Activated CD4-positive, alpha-beta T cell treated with anti-CD3 and anti-CD28 coated beads for 36 hours (primary cell): ENCODE measurements at regions of chr1 and their contacts with region 1.

Region 1: GRCh38 chr1:235504496-235505222 is 407 bp upstream of the B3GALNT2 start:
- DNase-seq: peak; percentile 99
- ATAC-seq: peak; percentile 89
- H3K4me3 Mint-ChIP-seq: peak overlapping the region; percentile 93
- H3K27ac Mint-ChIP-seq: peak overlapping the region; percentile 98
- H3K4me1 Mint-ChIP-seq: peaks cover 30% of the 10 kb centered on the region
- H3K27me3 Mint-ChIP-seq: no peaks in the 10 kb centered on the region

Region 2: DNA sequence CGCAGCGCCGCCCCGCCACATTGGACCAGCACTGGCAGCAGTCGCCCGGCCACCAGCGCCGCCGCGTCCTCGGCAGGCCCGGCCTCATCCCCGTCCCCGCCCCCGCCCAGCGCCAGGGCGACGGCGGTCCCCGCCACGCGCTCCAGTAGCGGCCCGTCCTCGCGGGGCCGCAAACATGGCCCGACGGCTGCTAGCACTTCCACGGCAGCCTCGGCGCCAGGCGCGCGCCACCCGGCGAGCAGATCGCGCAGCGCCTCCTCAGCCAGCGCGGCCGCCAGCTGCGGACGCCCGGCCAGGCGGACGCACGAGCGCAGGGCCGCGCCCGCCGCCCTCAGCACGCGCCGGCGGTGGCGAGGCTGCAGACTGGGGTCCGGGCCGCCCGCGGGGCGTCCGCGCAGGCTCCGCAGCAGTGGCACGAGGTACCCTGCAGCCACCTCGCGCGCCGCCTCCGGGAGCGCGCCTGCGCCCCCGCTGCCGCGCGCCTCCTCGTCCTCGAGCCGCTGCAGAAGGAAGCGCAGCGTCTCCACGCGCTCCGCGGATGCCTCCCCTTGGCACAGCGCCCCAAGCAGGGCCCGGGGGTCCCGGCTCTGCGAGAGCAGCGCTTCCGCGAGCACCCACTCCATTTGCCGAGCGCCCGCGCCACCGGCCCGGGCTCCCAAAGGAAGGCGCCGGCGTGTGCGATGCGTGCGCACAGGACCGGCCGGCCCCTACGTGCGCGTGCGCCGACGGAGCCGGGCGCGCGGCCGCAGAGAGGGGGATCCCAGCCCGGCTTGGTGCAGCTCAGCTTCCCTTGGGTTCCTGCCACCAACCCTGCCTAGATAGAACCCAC is 1026.0 kb before region 1 on chr1 and contains the start of gene TARBP1:
- CTCF ChIA-PET with region 1: no interaction called
- POLR2A ChIA-PET with region 1: no interaction called
- intact Hi-C with region 1: loop called in 1 of 2 experiments (anchors 2 kb)
- DNase-seq: peak; percentile 86
- ATAC-seq: peak; percentile 81
- H3K4me3 Mint-ChIP-seq: peak within 1 kb of the TSS; percentile 82
- H3K27ac Mint-ChIP-seq: peak within 1 kb of the TSS; percentile 80
- H3K4me1 Mint-ChIP-seq: peaks cover 56% of the 10 kb centered on the region
- H3K27me3 Mint-ChIP-seq: peaks cover 16% of the 10 kb centered on the region
- total RNA-seq, gene TARBP1: 37.7 to 41.5 TPM

Region 3: GRCh38 chr1:235018161-235018560 is 486.5 kb before region 1 on chr1:
- CTCF ChIA-PET with region 1: no interaction called
- POLR2A ChIA-PET with region 1: no interaction called
- intact Hi-C with region 1: no loop called
- DNase-seq: no peak
- ATAC-seq: no peak
- H3K4me3 Mint-ChIP-seq: no peak overlapping the region
- H3K27ac Mint-ChIP-seq: no peak overlapping the region
- H3K4me1 Mint-ChIP-seq: peaks cover 71% of the 10 kb centered on the region
- H3K27me3 Mint-ChIP-seq: no peaks in the 10 kb centered on the region

Region 4: GRCh38 chr1:235105051-235106043 is 399.3 kb before region 1 on chr1:
- CTCF ChIA-PET with region 1: interaction called, 6 read pairs
- POLR2A ChIA-PET with region 1: no interaction called
- intact Hi-C with region 1: loop called in 1 of 2 experiments (anchors 1 kb)
- DNase-seq: peak; percentile 26
- ATAC-seq: peak; percentile 59
- H3K4me3 Mint-ChIP-seq: peak overlapping the region; percentile 60
- H3K27ac Mint-ChIP-seq: peak overlapping the region; percentile 56
- H3K4me1 Mint-ChIP-seq: peaks cover 44% of the 10 kb centered on the region
- H3K27me3 Mint-ChIP-seq: peaks cover 4% of the 10 kb centered on the region

Region 5: GRCh38 chr1:235328357-235329138 is 176.1 kb before region 1 on chr1 and contains the start of gene GGPS1:
- CTCF ChIA-PET with region 1: no interaction called
- POLR2A ChIA-PET with region 1: interaction called, 5 read pairs
- intact Hi-C with region 1: loop called (anchors 1 kb)
- DNase-seq: peak; percentile 99
- ATAC-seq: peak; percentile 84
- H3K4me3 Mint-ChIP-seq: no peak within 1 kb of the TSS
- H3K27ac Mint-ChIP-seq: no peak within 1 kb of the TSS
- H3K4me1 Mint-ChIP-seq: peaks cover 42% of the 10 kb centered on the region
- H3K27me3 Mint-ChIP-seq: no peaks in the 10 kb centered on the region
- total RNA-seq, gene GGPS1: 35.6 to 37.4 TPM

Region 6: GRCh38 chr1:235545277-235545930 is 40.7 kb after region 1 on chr1:
- CTCF ChIA-PET with region 1: no interaction called
- POLR2A ChIA-PET with region 1: no interaction called
- intact Hi-C with region 1: no loop called
- DNase-seq: no peak
- ATAC-seq: no peak
- H3K4me3 Mint-ChIP-seq: no peak overlapping the region
- H3K27ac Mint-ChIP-seq: no peak overlapping the region
- H3K4me1 Mint-ChIP-seq: no peaks in the 10 kb centered on the region
- H3K27me3 Mint-ChIP-seq: no peaks in the 10 kb centered on the region

Region 7: GRCh38 chr1:235697508-235697907 is 192.8 kb after region 1 on chr1:
- CTCF ChIA-PET with region 1: interaction called, 4 read pairs
- POLR2A ChIA-PET with region 1: interaction called, 7 read pairs
- intact Hi-C with region 1: loop called in 1 of 2 experiments (anchors 1 kb)
- DNase-seq: no peak
- ATAC-seq: peak; percentile 100
- H3K4me3 Mint-ChIP-seq: no peak overlapping the region
- H3K27ac Mint-ChIP-seq: peak overlapping the region; percentile 85
- H3K4me1 Mint-ChIP-seq: peaks cover 17% of the 10 kb centered on the region
- H3K27me3 Mint-ChIP-seq: no peaks in the 10 kb centered on the region

Region 8: GRCh38 chr1:235888119-235888643 is 383.5 kb after region 1 on chr1:
- CTCF ChIA-PET with region 1: no interaction called
- POLR2A ChIA-PET with region 1: no interaction called
- intact Hi-C with region 1: loop called in 1 of 2 experiments (anchors 5 kb)
- DNase-seq: peak; percentile 78
- ATAC-seq: peak; percentile 88
- H3K4me3 Mint-ChIP-seq: peak overlapping the region; percentile 6
- H3K27ac Mint-ChIP-seq: peak overlapping the region; percentile 84
- H3K4me1 Mint-ChIP-seq: peaks cover 41% of the 10 kb centered on the region
- H3K27me3 Mint-ChIP-seq: no peaks in the 10 kb centered on the region

Region 9: GRCh38 chr1:236228411-236228810 is 723.8 kb after region 1 on chr1:
- CTCF ChIA-PET with region 1: no interaction called
- POLR2A ChIA-PET with region 1: no interaction called
- intact Hi-C with region 1: no loop called
- DNase-seq: no peak
- ATAC-seq: no peak
- H3K4me3 Mint-ChIP-seq: no peak overlapping the region
- H3K27ac Mint-ChIP-seq: no peak overlapping the region
- H3K4me1 Mint-ChIP-seq: no peaks in the 10 kb centered on the region
- H3K27me3 Mint-ChIP-seq: no peaks in the 10 kb centered on the region

Region 10: GRCh38 chr1:236523701-236524141 is 1019.1 kb after region 1 on chr1 and contains the start of gene LGALS8:
- CTCF ChIA-PET with region 1: no interaction called
- POLR2A ChIA-PET with region 1: no interaction called
- intact Hi-C with region 1: loop called in 1 of 2 experiments (anchors 10 kb)
- DNase-seq: peak; percentile 94
- ATAC-seq: peak; percentile 79
- H3K4me3 Mint-ChIP-seq: peak within 1 kb of the TSS; percentile 99
- H3K27ac Mint-ChIP-seq: peak within 1 kb of the TSS; percentile 98
- H3K4me1 Mint-ChIP-seq: peaks cover 25% of the 10 kb centered on the region
- H3K27me3 Mint-ChIP-seq: no peaks in the 10 kb centered on the region
- total RNA-seq, gene LGALS8: 106 to 155 TPM